ENCODE measurements at regions of chr4 and their contacts with region 1.

Region 1: DNA sequence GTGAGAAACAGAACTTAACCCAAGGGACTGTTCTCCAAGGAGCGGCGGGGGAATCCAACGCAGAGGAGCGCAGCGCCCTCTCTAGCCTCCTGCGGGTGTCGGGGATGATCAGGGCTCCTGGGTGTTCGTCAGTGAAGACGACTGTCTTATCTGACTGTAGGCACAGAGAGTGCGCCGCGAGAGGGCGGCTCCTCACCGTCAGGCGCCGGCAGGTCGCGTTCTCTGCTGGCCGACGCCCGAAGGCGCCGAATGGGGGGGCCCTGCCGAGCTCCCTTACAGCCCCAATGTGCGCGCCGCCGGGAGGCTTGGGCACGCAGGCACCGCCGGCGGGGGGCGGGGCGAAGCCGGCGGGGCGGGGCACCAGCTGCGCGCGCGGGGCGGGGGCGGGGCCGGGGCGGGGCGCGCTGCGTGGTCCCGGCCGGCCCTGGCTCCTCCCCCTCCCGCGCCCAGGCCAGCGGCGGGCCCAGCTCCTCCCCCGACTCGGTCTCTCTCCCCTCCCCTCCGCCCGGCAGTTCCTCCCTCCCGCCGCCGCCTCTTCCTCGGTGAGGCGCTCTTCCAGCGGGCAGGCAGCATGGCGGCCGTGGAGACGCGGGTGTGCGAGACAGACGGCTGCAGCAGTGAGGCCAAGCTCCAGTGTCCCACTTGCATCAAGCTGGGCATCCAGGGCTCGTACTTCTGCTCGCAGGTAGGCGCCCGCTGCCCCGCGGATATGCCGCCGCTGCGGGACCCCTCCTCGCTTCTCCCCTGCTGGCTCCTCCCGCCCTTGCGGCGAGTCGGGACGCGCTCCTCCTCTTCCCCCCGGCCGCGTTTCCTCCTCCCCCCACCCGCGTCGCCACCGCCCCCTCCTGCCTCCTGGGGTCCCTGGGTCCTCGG is at the start of gene METAP1:
- DNase-seq: peak; percentile 91
- H3K4me3 Mint-ChIP-seq: peak within 1 kb of the TSS; percentile 82
- H3K27ac Mint-ChIP-seq: peak within 1 kb of the TSS; percentile 75
- H3K4me1 Mint-ChIP-seq: peaks cover 32% of the 10 kb centered on the region
- H3K27me3 Mint-ChIP-seq: no peaks in the 10 kb centered on the region
- CTCF ChIP-seq: no peak
- total RNA-seq, gene METAP1: 59.0 and 60.5 TPM in 2 replicates

Region 2: GRCh38 chr4:98928505-98929340 is 66.7 kb before region 1 on chr4 and contains the start of gene EIF4E:
- CTCF ChIA-PET with region 1: interaction called, 6 read pairs
- intact Hi-C with region 1: loop called (anchors 10 kb)
- DNase-seq: peak; percentile 92
- H3K4me3 Mint-ChIP-seq: peak within 1 kb of the TSS; percentile 98
- H3K27ac Mint-ChIP-seq: peak within 1 kb of the TSS; percentile 92
- H3K4me1 Mint-ChIP-seq: peaks cover 16% of the 10 kb centered on the region
- H3K27me3 Mint-ChIP-seq: no peaks in the 10 kb centered on the region
- CTCF ChIP-seq: no peak
- total RNA-seq, gene EIF4E: 103 and 105 TPM in 2 replicates

Region 3: GRCh38 chr4:99028187-99028586 is 32.8 kb after region 1 on chr4:
- CTCF ChIA-PET with region 1: interaction called, 5 read pairs
- intact Hi-C with region 1: loop called (anchors 1 kb)
- DNase-seq: no peak
- H3K4me3 Mint-ChIP-seq: no peak overlapping the region
- H3K27ac Mint-ChIP-seq: peak overlapping the region; percentile 1
- H3K4me1 Mint-ChIP-seq: peaks cover 36% of the 10 kb centered on the region
- H3K27me3 Mint-ChIP-seq: no peaks in the 10 kb centered on the region
- CTCF ChIP-seq: no peak

Region 4: GRCh38 chr4:99054428-99054994 is 59.1 kb after region 1 on chr4:
- CTCF ChIA-PET with region 1: interaction called, 37 read pairs
- intact Hi-C with region 1: loop called (anchors 2 kb)
- DNase-seq: no peak
- H3K4me3 Mint-ChIP-seq: no peak overlapping the region
- H3K27ac Mint-ChIP-seq: no peak overlapping the region
- H3K4me1 Mint-ChIP-seq: peaks cover 11% of the 10 kb centered on the region
- H3K27me3 Mint-ChIP-seq: no peaks in the 10 kb centered on the region
- CTCF ChIP-seq: no peak